HepG2 (cell line): ENCODE measurements at regions of chr10 and their contacts with region 1.

Region 1: GRCh38 chr10:33330543-33331378 is 3.7 kb downstream of the NRP1 start:
- DNase-seq: peak; percentile 73
- ATAC-seq: peak; percentile 35
- H3K4me3 ChIP-seq: peak overlapping the region; percentile 24 to 34 (median 26); a peak in 4 of 6 replicates
- H3K27ac ChIP-seq: no peak overlapping the region
- H3K4me1 ChIP-seq: peaks cover 74% of the 10 kb centered on the region
- H3K27me3 ChIP-seq: peaks cover under 1 to 16% of the 10 kb centered on the region in 2 experiments; a peak in 3 of 5 replicates
- CTCF ChIP-seq: peak; percentile 89
- EP300 ChIP-seq: no peak
- POLR2A ChIP-seq: no peak
- RAD21 ChIP-seq: peak; percentile 74

Region 2: GRCh38 chr10:32388258-32389027 is 942.3 kb before region 1 on chr10:
- CTCF ChIA-PET with region 1: no interaction called
- POLR2A ChIA-PET with region 1: no interaction called
- in situ Hi-C with region 1: no loop called
- intact Hi-C with region 1: no loop called
- DNase-seq: no peak
- ATAC-seq: no peak
- H3K4me3 ChIP-seq: no peak overlapping the region
- H3K27ac ChIP-seq: no peak overlapping the region
- H3K4me1 ChIP-seq: 0 out of 2 replicates have a peak, but pooled peaks cover 5% of the 10 kb centered on the region
- H3K27me3 ChIP-seq: no peaks in the 10 kb centered on the region
- CTCF ChIP-seq: no peak
- EP300 ChIP-seq: no peak
- POLR2A ChIP-seq: no peak
- RAD21 ChIP-seq: no peak

Region 3: DNA sequence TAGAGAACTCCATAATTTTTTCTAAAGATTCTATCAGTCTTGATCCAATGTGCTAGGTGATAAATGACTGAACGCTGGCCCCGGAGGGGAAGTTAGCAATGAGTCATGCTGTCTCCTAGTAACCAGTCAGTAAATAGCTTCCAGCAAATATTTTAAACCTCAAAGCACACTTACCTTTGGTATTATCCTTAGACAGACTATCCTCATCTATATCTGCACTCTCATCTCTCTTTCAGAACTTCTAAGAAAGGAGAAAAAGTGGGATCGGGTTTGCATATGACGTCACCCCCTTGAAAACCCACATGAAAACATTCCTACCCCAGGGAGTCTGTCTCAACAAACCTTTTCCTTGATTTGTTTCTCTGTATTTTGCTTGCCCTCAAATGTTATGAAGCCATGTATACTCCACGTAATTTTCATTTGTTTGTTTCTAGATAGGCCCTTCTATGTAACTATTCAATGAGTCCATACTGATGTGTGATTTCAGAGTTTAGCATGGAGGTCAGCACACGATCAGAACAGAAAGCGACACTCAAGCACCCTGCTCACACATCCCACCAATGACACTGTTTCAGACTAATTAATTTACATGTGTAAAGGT is 178.6 kb after region 1 on chr10:
- CTCF ChIA-PET with region 1: no interaction called
- POLR2A ChIA-PET with region 1: interaction called, 19 read pairs
- in situ Hi-C with region 1: no loop called
- intact Hi-C with region 1: no loop called
- DNase-seq: peak; percentile 92
- ATAC-seq: peak; percentile 90
- H3K4me3 ChIP-seq: peak overlapping the region; percentile 20 to 55 (median 40); a peak in 5 of 6 replicates
- H3K27ac ChIP-seq: peak overlapping the region; percentile 93
- H3K4me1 ChIP-seq: peaks cover 37% of the 10 kb centered on the region
- H3K27me3 ChIP-seq: no peaks in the 10 kb centered on the region
- CTCF ChIP-seq: no peak
- EP300 ChIP-seq: peak; percentile 85 to 90
- POLR2A ChIP-seq: peak in 1 of 2 experiments; percentile 33; a peak in 1 of 4 replicates
- RAD21 ChIP-seq: no peak

Region 4: DNA sequence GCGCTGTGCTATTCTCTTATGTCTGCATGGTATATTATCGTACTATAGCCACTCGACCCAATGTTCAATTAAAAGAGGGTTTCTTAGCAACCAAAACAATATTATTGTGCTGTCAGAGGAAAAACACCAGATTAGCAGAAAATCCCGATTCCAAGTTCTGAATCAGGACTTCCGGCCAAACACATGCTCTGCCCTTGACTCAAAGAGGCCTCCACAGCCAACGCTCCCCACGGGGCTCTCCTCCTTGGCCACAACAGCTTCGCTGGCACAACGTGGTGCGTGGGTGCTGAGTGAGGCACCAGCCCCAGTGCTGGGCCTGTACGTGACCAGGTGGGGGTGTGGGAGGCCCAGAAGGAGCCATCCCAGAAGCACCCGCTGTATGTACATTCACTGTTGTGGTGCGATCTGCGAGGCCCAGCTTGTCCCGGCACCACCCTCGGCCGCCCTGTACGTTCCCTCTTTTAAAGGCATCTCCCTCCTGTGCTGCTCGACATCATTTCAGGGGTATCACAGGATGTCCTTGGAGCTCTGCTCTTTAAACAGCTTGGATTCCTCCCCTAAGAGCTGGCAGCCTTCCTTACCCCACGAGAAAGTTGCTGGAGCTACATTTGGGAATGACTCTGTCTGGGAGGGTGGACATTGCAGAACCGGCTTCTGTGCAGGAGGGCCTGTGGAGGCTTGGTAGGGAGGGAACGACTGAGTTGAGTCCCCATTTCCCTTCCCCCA is 748.1 kb after region 1 on chr10:
- CTCF ChIA-PET with region 1: no interaction called
- POLR2A ChIA-PET with region 1: no interaction called
- in situ Hi-C with region 1: no loop called
- intact Hi-C with region 1: loop called (anchors 10 kb)
- DNase-seq: no peak
- ATAC-seq: no peak
- H3K4me3 ChIP-seq: no peak overlapping the region
- H3K27ac ChIP-seq: no peak overlapping the region
- H3K4me1 ChIP-seq: peaks cover 20% of the 10 kb centered on the region
- H3K27me3 ChIP-seq: peaks cover 2 to 3% of the 10 kb centered on the region in 2 experiments; a peak in 1 of 5 replicates
- CTCF ChIP-seq: no peak
- EP300 ChIP-seq: no peak
- POLR2A ChIP-seq: no peak
- RAD21 ChIP-seq: no peak

Region 5: DNA sequence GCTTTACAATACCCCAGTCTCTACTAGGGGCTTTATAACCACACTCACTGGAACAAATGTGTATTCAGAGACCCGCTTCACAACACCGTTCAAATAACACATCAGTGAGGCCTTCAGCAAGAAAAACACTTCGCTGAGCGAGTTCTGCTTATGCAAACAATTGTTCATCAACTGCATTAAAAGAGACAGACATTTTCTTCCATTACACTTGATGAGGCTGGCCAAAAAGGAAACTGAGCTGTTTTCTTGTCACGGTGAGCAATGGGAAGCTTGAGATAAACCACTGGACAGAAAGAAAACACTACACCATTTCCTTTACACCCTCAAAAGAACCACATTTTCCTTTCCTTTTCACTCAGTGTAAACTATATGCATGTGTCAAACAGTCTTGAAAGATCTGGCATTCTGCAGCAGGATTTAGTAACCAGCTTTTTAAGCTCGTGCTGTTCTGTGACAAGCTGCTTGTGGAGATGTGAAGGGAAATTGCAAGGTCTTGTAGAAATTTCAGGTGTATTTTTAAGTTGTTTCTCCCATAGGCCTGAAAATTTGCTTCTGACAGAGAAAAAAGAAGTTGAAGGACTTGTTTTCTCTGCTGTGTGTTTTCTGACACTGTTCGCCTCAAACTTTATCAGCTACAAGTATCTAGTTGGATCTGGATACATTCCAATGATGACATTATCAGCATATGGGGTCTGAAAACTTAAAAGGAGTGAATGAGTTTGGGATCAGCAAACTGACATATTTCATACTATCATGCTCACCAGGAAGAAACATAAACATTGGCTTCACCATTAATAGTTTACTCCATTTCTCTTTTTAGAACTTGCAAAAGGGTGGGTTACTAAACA is 791.2 kb after region 1 on chr10:
- CTCF ChIA-PET with region 1: no interaction called
- POLR2A ChIA-PET with region 1: interaction called, 3 read pairs
- in situ Hi-C with region 1: loop called (anchors 10 kb)
- intact Hi-C with region 1: no loop called
- DNase-seq: peak; percentile 71
- ATAC-seq: peak; percentile 73
- H3K4me3 ChIP-seq: peak overlapping the region; percentile 3 to 44 (median 24); a peak in 2 of 6 replicates
- H3K27ac ChIP-seq: peak overlapping the region; percentile 90
- H3K4me1 ChIP-seq: peaks cover 68% of the 10 kb centered on the region
- H3K27me3 ChIP-seq: no peaks in the 10 kb centered on the region
- CTCF ChIP-seq: no peak
- EP300 ChIP-seq: no peak
- POLR2A ChIP-seq: no peak
- RAD21 ChIP-seq: no peak

Region 6: GRCh38 chr10:34156781-34157425 is 826.1 kb after region 1 on chr10:
- CTCF ChIA-PET with region 1: no interaction called
- POLR2A ChIA-PET with region 1: no interaction called
- in situ Hi-C with region 1: no loop called
- intact Hi-C with region 1: no loop called
- DNase-seq: no peak
- ATAC-seq: peak; percentile 36; the same call in 2 of the 3 replicates
- H3K4me3 ChIP-seq: no peak overlapping the region
- H3K27ac ChIP-seq: no peak overlapping the region
- H3K4me1 ChIP-seq: peaks cover 30% of the 10 kb centered on the region
- H3K27me3 ChIP-seq: no peaks in the 10 kb centered on the region
- CTCF ChIP-seq: no peak
- EP300 ChIP-seq: no peak
- POLR2A ChIP-seq: no peak
- RAD21 ChIP-seq: no peak

Region 7: DNA sequence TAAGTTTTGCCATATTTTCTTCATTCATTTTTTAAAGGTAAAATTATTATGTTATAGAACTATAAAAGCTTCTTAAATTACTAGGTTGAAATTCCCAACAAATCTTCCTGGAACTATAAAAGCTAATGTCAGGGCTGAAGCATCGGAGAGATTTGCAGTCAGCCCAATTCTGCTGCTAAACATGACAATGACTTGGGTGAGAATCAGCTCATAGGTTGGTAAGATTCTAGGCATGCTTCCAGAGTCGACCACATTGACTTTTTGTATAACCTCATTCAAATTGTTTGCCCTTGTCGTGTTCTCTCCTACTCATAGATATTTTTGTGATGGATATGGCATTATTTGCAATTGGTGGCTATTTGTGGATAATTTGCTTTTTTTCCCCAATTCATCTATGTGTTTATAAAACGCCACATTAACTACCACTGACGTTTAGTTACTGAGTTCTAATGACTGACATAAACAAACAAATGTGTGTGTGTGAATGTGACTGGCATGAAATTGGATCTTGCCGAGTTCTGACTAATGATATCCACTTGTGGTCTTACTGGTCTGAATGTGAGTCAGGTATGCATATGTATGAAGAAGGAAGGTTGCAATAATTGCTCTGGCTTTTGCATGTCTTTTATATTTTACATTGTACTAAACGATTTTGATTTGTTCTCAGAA is 904.5 kb after region 1 on chr10:
- CTCF ChIA-PET with region 1: no interaction called
- POLR2A ChIA-PET with region 1: no interaction called
- in situ Hi-C with region 1: loop called (anchors 10 kb)
- intact Hi-C with region 1: no loop called
- DNase-seq: no peak
- ATAC-seq: no peak
- H3K4me3 ChIP-seq: no peak overlapping the region
- H3K27ac ChIP-seq: no peak overlapping the region
- H3K4me1 ChIP-seq: peaks cover 42% of the 10 kb centered on the region
- H3K27me3 ChIP-seq: no peaks in the 10 kb centered on the region
- CTCF ChIP-seq: no peak
- EP300 ChIP-seq: no peak
- POLR2A ChIP-seq: no peak
- RAD21 ChIP-seq: no peak

Region 8: GRCh38 chr10:34299105-34299611 is 968.4 kb after region 1 on chr10:
- CTCF ChIA-PET with region 1: no interaction called
- POLR2A ChIA-PET with region 1: no interaction called
- in situ Hi-C with region 1: no loop called
- intact Hi-C with region 1: loop called (anchors 10 kb)
- DNase-seq: no peak
- ATAC-seq: no peak
- H3K4me3 ChIP-seq: no peak overlapping the region
- H3K27ac ChIP-seq: no peak overlapping the region
- H3K4me1 ChIP-seq: peaks cover 40% of the 10 kb centered on the region
- H3K27me3 ChIP-seq: no peaks in the 10 kb centered on the region
- CTCF ChIP-seq: no peak
- EP300 ChIP-seq: no peak
- POLR2A ChIP-seq: no peak
- RAD21 ChIP-seq: no peak

Region 9: DNA sequence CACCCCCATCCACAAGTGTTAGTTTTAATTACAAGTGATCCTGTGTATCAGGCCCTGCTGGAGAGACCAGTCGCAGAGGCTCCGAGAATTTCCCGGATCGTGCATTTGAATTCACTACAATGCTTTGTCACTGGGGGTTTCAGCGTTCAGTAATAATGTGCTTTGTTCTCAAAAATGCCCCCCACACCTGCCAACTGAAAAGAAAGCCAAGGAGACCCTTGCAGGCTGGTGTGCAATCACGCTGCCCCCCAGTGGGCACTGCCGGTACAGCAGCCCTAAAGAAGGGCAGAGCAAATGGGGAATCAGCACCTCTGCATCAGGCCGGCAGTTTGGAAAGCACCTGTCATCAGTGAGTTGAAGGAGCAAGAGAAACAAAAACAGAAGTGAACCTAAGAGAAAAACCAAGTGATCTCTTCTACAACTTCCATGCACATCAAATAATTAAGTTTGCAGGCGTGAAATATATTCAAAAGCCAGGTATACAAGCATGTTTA is 1306.7 kb after region 1 on chr10:
- CTCF ChIA-PET with region 1: no interaction called
- POLR2A ChIA-PET with region 1: no interaction called
- in situ Hi-C with region 1: loop called (anchors 25 kb)
- intact Hi-C with region 1: loop called (anchors 2 kb)
- DNase-seq: peak; percentile 16
- ATAC-seq: peak; percentile 70
- H3K4me3 ChIP-seq: no peak overlapping the region
- H3K27ac ChIP-seq: no peak overlapping the region
- H3K4me1 ChIP-seq: peaks cover 17% of the 10 kb centered on the region
- H3K27me3 ChIP-seq: no peaks in the 10 kb centered on the region
- CTCF ChIP-seq: peak; percentile 92
- EP300 ChIP-seq: no peak
- POLR2A ChIP-seq: no peak
- RAD21 ChIP-seq: peak; percentile 49